ENCODE measurements at regions of chr9 and their contacts with region 1.

Region 1: DNA sequence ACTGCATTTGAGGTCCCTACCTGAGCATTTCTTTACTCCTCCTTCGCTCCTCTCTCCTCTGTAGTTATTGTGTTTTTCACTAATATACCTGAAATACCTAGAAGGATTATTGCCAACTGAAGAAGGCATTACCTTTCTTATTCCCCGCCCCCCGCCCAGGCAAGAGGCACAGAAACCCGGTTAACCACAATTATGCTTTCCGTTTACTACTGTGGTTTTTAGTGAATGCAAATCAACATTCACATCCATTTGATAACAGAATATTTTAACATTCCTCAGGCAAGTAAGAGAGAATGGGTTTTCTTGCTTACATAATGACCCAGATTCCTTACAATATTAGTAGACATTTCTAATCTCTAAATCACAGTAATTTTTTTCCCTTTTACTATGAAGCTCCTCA is 136.9 kb downstream of the PCSK5 start:
- DNase-seq: no peak
- ATAC-seq: no peak
- H3K4me3 ChIP-seq: no peak overlapping the region
- H3K27ac ChIP-seq: no peak overlapping the region
- H3K4me1 ChIP-seq: no peaks in the 10 kb centered on the region
- H3K27me3 ChIP-seq: no peaks in the 10 kb centered on the region
- CTCF ChIP-seq: no peak

Region 2: GRCh38 chr9:75683591-75683990 is 343.8 kb before region 1 on chr9:
- CTCF ChIA-PET with region 1: no interaction called
- POLR2A ChIA-PET with region 1: interaction called, 12 read pairs
- in situ Hi-C with region 1: no loop called
- intact Hi-C with region 1: no loop called
- DNase-seq: no peak
- ATAC-seq: no peak
- H3K4me3 ChIP-seq: no peak overlapping the region
- H3K27ac ChIP-seq: no peak overlapping the region
- H3K4me1 ChIP-seq: no peaks in the 10 kb centered on the region
- H3K27me3 ChIP-seq: no peaks in the 10 kb centered on the region
- CTCF ChIP-seq: no peak

Region 3: DNA sequence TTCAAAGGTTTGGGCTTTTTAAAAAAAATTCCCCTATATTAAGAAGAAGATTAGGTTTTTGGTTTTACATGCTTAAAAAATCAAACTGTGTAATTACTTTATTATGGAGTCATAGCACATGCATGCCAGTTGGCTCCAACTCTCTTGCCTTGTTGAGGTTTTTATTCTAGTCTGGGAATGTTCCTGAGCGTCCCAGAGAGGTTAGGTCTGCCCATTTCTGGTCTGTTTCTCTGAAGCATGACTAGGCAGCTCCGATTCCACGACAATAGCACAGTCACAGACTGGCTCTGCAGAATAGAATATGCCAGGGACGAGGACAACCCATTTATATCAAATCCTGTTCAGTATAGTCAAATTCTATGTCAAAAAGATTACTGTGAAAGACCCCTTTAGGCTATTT is 80.1 kb after region 1 on chr9:
- CTCF ChIA-PET with region 1: no interaction called
- POLR2A ChIA-PET with region 1: no interaction called
- in situ Hi-C with region 1: no loop called
- intact Hi-C with region 1: no loop called
- DNase-seq: no peak
- ATAC-seq: no peak
- H3K4me3 ChIP-seq: no peak overlapping the region
- H3K27ac ChIP-seq: no peak overlapping the region
- H3K4me1 ChIP-seq: no peaks in the 10 kb centered on the region
- H3K27me3 ChIP-seq: no peaks in the 10 kb centered on the region
- CTCF ChIP-seq: no peak